ENCODE measurements at regions of chr15 and their contacts with region 1.

Region 1: DNA sequence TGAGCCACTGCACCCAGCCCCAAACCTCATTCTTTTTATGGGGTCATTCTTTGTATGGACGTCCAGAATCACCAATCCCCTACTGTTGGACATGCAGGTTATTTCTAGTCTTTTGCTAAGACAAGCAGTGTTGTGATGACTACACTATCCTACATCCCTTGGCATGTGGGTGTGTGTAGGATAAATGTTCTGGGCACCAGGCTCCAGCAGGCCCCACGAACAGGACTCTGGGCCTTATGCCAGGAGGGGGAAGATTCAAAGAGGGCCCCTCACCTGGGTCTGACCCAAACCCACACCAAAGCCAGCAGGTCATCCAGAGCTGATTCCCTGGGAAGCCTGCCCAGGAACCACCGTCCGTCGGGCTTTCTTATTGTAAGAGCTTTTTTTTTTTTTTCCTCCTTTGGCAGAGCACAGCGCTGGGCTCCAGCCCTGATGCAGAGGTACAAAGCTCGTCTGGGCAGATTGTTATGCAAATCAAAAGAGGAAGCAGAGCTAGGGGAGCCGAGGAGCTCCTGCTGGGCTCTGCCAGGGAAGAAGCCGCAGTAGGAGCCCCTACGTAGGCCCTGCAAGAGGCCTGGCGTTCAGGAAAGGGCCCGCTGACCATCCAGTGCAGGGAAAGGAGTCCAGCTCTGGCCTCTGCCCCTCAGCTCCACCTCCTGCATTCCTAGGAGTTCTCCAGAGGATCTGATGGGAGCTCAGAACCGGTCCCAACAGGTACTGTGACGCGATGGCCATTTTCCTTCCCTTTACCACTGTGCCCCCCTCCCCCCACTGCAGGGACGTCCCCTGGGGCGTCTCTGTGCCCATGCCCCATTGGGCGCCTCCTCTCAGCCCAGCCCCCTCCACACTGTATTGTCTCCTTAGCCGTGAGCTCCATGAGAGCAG is 29.0 kb upstream of the FURIN start:
- DNase-seq: peak in 5 of 14 experiments; percentile 10 to 49 (median 24)
- ATAC-seq: no peak
- H3K4me3 ChIP-seq: peak overlapping the region; percentile 13
- H3K4me3 Mint-ChIP-seq: peak overlapping the region; percentile 73
- H3K27ac ChIP-seq: no peak overlapping the region
- H3K27ac Mint-ChIP-seq: peak overlapping the region; percentile 87
- H3K4me1 ChIP-seq: peaks cover 36% of the 10 kb centered on the region
- H3K4me1 Mint-ChIP-seq: peaks cover 34% of the 10 kb centered on the region
- H3K27me3 ChIP-seq: no peaks in the 10 kb centered on the region
- H3K27me3 Mint-ChIP-seq: no peaks in the 10 kb centered on the region
- CTCF ChIP-seq: no peak

Region 2: GRCh38 chr15:90818251-90819210 is 20.9 kb before region 1 on chr15:
- CTCF ChIA-PET with region 1: no interaction called
- POLR2A ChIA-PET with region 1: interaction called, 4 read pairs
- intact Hi-C with region 1: loop called in 1 of 2 experiments (anchors 2 kb)
- DNase-seq: peak in 4 of 14 experiments; percentile 24 to 53 (median 50)
- ATAC-seq: peak; percentile 70
- H3K4me3 ChIP-seq: no peak overlapping the region
- H3K4me3 Mint-ChIP-seq: no peak overlapping the region
- H3K27ac ChIP-seq: no peak overlapping the region
- H3K27ac Mint-ChIP-seq: no peak overlapping the region
- H3K4me1 ChIP-seq: peaks cover 56% of the 10 kb centered on the region
- H3K4me1 Mint-ChIP-seq: peaks cover 26% of the 10 kb centered on the region
- H3K27me3 ChIP-seq: no peaks in the 10 kb centered on the region
- H3K27me3 Mint-ChIP-seq: no peaks in the 10 kb centered on the region
- CTCF ChIP-seq: peak; percentile 22

Region 3: DNA sequence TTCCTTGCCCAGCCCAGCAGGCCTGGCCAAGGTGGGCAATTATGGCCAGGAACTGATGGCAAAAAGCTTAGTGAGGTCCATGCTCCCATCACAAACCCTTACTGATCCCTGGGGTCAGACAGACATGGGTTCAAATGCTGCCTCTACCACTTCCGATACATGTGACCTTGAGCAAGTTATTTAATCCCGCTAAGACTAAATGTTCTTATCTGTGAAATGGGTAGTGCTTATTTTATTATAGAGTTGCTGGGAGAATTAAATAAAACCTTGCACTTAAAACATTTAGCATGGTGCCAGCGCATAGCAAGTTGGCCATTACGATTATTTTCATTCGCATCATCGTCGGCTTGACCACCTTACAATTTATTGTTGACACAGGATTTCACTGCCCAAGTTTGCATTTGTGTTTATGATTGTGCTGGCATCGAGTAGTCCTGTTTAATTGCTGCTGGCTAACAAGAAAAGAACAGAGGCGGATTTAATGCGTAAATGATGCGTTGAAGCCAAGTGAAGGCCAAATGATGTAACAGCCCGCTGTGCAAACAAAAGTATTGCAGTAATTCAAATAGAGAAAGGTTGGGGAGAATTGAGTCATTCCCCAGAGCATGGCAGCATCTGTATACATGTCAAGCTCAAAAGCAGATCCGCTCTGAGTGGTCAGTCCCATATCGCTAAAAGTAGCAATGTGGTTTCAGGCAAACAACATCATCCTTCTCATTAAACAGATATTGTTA is 21.7 kb after region 1 on chr15:
- CTCF ChIA-PET with region 1: no interaction called
- POLR2A ChIA-PET with region 1: interaction called, 3 read pairs
- intact Hi-C with region 1: loop called in 1 of 2 experiments (anchors 1 kb)
- DNase-seq: no peak
- ATAC-seq: no peak
- H3K4me3 ChIP-seq: no peak overlapping the region
- H3K4me3 Mint-ChIP-seq: no peak overlapping the region
- H3K27ac ChIP-seq: no peak overlapping the region
- H3K27ac Mint-ChIP-seq: no peak overlapping the region
- H3K4me1 ChIP-seq: peaks cover 30% of the 10 kb centered on the region
- H3K4me1 Mint-ChIP-seq: peaks cover 29% of the 10 kb centered on the region
- H3K27me3 ChIP-seq: no peaks in the 10 kb centered on the region
- H3K27me3 Mint-ChIP-seq: no peaks in the 10 kb centered on the region
- CTCF ChIP-seq: no peak

Region 4: GRCh38 chr15:90869601-90870353 is 30.3 kb after region 1 on chr15:
- CTCF ChIA-PET with region 1: no interaction called
- POLR2A ChIA-PET with region 1: interaction called, 8 read pairs
- intact Hi-C with region 1: loop called (anchors 1 to 2 kb)
- DNase-seq: peak in 6 of 14 experiments; percentile 17 to 74 (median 52)
- ATAC-seq: peak; percentile 32
- H3K4me3 ChIP-seq: no peak overlapping the region
- H3K4me3 Mint-ChIP-seq: peak overlapping the region; percentile 98
- H3K27ac ChIP-seq: peak overlapping the region in 1 of 2 donors; percentile 25
- H3K27ac Mint-ChIP-seq: peak overlapping the region; percentile 89
- H3K4me1 ChIP-seq: peaks cover 46% of the 10 kb centered on the region
- H3K4me1 Mint-ChIP-seq: peaks cover 41% of the 10 kb centered on the region
- H3K27me3 ChIP-seq: no peaks in the 10 kb centered on the region
- H3K27me3 Mint-ChIP-seq: no peaks in the 10 kb centered on the region
- CTCF ChIP-seq: no peak

Region 5: DNA sequence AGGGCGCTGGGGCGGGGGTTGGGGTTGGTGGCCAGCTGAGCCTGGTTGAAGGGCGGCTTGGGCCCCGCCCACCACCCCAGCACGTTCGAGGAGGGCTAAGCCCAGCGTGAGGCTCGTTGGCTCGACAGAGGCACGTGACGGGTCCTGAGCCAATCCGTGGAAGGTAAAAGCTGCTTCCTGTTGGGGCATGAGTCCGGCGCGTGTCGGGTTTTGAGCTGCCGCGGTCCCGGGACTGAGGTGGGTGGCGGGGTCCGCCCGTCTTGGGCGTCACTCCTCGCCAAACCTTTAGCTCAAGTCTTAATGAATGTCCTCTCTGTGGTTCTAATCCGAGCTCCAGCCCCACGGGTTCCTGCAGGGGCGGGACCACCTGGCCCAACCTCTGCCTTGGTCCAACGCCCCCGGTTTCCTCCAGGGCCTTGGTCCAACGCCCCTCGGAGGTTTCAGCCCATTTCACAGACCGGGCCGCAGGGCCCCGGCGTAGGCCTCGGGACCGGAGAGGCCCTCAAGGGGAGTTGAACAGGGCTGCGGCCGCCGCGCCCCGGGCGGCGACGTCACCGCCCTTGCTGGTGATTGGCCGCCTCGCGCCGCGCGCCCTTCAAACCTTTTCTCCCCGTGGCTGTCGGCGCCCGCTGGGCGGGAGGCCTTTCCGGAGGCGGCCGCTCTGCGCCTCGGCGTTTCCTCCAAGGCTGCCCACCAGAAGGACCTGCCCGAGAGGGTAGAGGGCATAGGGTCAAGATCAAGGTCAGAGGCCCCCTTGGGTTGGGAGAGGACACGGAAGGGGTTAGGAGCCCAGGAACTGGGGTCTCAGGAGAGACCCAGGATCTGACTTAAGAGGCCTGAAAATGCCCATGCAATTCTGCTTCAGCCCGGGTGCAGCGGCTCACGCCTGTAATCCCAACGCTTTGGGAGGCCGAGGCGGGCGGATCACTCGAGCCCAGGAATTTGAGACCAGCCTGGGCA is 115.6 kb after region 1 on chr15 and contains the start of gene RCCD1:
- CTCF ChIA-PET with region 1: no interaction called
- POLR2A ChIA-PET with region 1: no interaction called
- intact Hi-C with region 1: no loop called
- DNase-seq: peak; percentile 71 to 94 (median 80)
- ATAC-seq: peak; percentile 92
- H3K4me3 ChIP-seq: peak within 1 kb of the TSS; percentile 74
- H3K4me3 Mint-ChIP-seq: peak within 1 kb of the TSS; percentile 87
- H3K27ac ChIP-seq: peak within 1 kb of the TSS; percentile 87 to 92
- H3K27ac Mint-ChIP-seq: peak within 1 kb of the TSS; percentile 88
- H3K4me1 ChIP-seq: peaks cover 26% of the 10 kb centered on the region
- H3K4me1 Mint-ChIP-seq: peaks cover 9% of the 10 kb centered on the region
- H3K27me3 ChIP-seq: no peaks in the 10 kb centered on the region
- H3K27me3 Mint-ChIP-seq: no peaks in the 10 kb centered on the region
- CTCF ChIP-seq: no peak
- total RNA-seq, gene RCCD1: 4.5 to 4.8 TPM

Measured in CD4-positive, alpha-beta T cell (primary cell).